Mammary epithelial cell (primary cell): ENCODE measurements at regions of chr2 and their contacts with region 1.

Region 1: GRCh38 chr2:109275120-109276012 is 146.4 kb downstream of the SH3RF3 start:
- DNase-seq: no peak
- H3K4me3 ChIP-seq: no peak overlapping the region
- H3K27ac ChIP-seq: no peak overlapping the region
- H3K4me1 ChIP-seq: no peaks in the 10 kb centered on the region
- H3K27me3 ChIP-seq: peaks cover 4% of the 10 kb centered on the region
- CTCF ChIP-seq: no peak

Region 2: GRCh38 chr2:109195193-109196045 is 79.9 kb before region 1 on chr2:
- CTCF ChIA-PET with region 1: no interaction called
- dilution Hi-C with region 1: loop called (anchors 5 kb)
- in situ Hi-C with region 1: no loop called
- intact Hi-C with region 1: no loop called
- DNase-seq: no peak
- H3K4me3 ChIP-seq: no peak overlapping the region
- H3K27ac ChIP-seq: no peak overlapping the region
- H3K4me1 ChIP-seq: no peaks in the 10 kb centered on the region
- H3K27me3 ChIP-seq: peaks cover 14% of the 10 kb centered on the region
- CTCF ChIP-seq: no peak